ENCODE measurements at regions of chr20 and their contacts with region 1.

Region 1: GRCh38 chr20:38357653-38358207 is 11.4 kb downstream of the LBP start:
- DNase-seq: no peak
- ATAC-seq: no peak
- H3K4me3 ChIP-seq: no peak overlapping the region
- H3K4me3 Mint-ChIP-seq: no peak overlapping the region
- H3K27ac ChIP-seq: no peak overlapping the region
- H3K27ac Mint-ChIP-seq: no peak overlapping the region
- H3K4me1 ChIP-seq: no peaks in the 10 kb centered on the region
- H3K4me1 Mint-ChIP-seq: peaks cover 0 to 4% (median 0%) of the 10 kb centered on the region in 7 donors
- H3K27me3 ChIP-seq: no peaks in the 10 kb centered on the region
- H3K27me3 Mint-ChIP-seq: no peaks in the 10 kb centered on the region

Region 2: GRCh38 chr20:38057351-38057972 is 300.3 kb before region 1 on chr20:
- CTCF ChIA-PET with region 1: no interaction called
- POLR2A ChIA-PET with region 1: no interaction called
- intact Hi-C with region 1: loop called in 1 of 2 experiments (anchors 5 kb)
- DNase-seq: peak; percentile 33 to 69 (median 60)
- ATAC-seq: peak; percentile 98
- H3K4me3 ChIP-seq: no peak overlapping the region
- H3K4me3 Mint-ChIP-seq: peak overlapping the region in 1 of 10 donors; percentile 52
- H3K27ac ChIP-seq: no peak overlapping the region
- H3K27ac Mint-ChIP-seq: peak overlapping the region in 8 of 9 donors; percentile 14 to 82 (median 30)
- H3K4me1 ChIP-seq: no peaks in the 10 kb centered on the region
- H3K4me1 Mint-ChIP-seq: peaks cover 5 to 37% (median 31%) of the 10 kb centered on the region in 7 donors
- H3K27me3 ChIP-seq: no peaks in the 10 kb centered on the region
- H3K27me3 Mint-ChIP-seq: no peaks in the 10 kb centered on the region

Region 3: GRCh38 chr20:38270869-38271605 is 86.7 kb before region 1 on chr20:
- CTCF ChIA-PET with region 1: no interaction called
- POLR2A ChIA-PET with region 1: no interaction called
- intact Hi-C with region 1: no loop called
- DNase-seq: no peak
- ATAC-seq: no peak
- H3K4me3 ChIP-seq: no peak overlapping the region
- H3K4me3 Mint-ChIP-seq: no peak overlapping the region
- H3K27ac ChIP-seq: no peak overlapping the region
- H3K27ac Mint-ChIP-seq: no peak overlapping the region
- H3K4me1 ChIP-seq: no peaks in the 10 kb centered on the region
- H3K4me1 Mint-ChIP-seq: peaks cover 0 to 2% (median 0%) of the 10 kb centered on the region in 7 donors
- H3K27me3 ChIP-seq: no peaks in the 10 kb centered on the region
- H3K27me3 Mint-ChIP-seq: peaks cover 5 to 23% (median 11%) of the 10 kb centered on the region in 5 donors

Region 4: GRCh38 chr20:38875175-38875993 is 517.7 kb after region 1 on chr20:
- CTCF ChIA-PET with region 1: no interaction called
- POLR2A ChIA-PET with region 1: no interaction called
- intact Hi-C with region 1: no loop called
- DNase-seq: peak in 8 of 9 donors; percentile 28 to 56 (median 52)
- ATAC-seq: peak; percentile 69
- H3K4me3 ChIP-seq: peak overlapping the region; percentile 46
- H3K4me3 Mint-ChIP-seq: peak overlapping the region; percentile 75 to 94 (median 86)
- H3K27ac ChIP-seq: peak overlapping the region; percentile 65
- H3K27ac Mint-ChIP-seq: peak overlapping the region; percentile 84 to 94 (median 92)
- H3K4me1 ChIP-seq: peaks cover 46 to 66% of the 10 kb centered on the region in 2 donors
- H3K4me1 Mint-ChIP-seq: peaks cover 64 to 91% (median 79%) of the 10 kb centered on the region in 7 donors
- H3K27me3 ChIP-seq: no peaks in the 10 kb centered on the region
- H3K27me3 Mint-ChIP-seq: no peaks in the 10 kb centered on the region

Measured in naive thymus-derived CD4-positive, alpha-beta T cell (primary cell).